CD4-positive, alpha-beta T cell (primary cell): ENCODE measurements at regions of chr19 and their contacts with region 1.

Region 1: GRCh38 chr19:36665832-36666231 is 805 bp downstream of the ZNF461 start:
- DNase-seq: no peak
- ATAC-seq: no peak
- H3K4me3 ChIP-seq: peak overlapping the region; percentile 97
- H3K4me3 Mint-ChIP-seq: peak overlapping the region; percentile 98
- H3K27ac ChIP-seq: no peak overlapping the region
- H3K27ac Mint-ChIP-seq: peak overlapping the region; percentile 92
- H3K4me1 ChIP-seq: peaks cover 24% of the 10 kb centered on the region
- H3K4me1 Mint-ChIP-seq: peaks cover 45% of the 10 kb centered on the region
- H3K27me3 ChIP-seq: no peaks in the 10 kb centered on the region
- H3K27me3 Mint-ChIP-seq: no peaks in the 10 kb centered on the region
- CTCF ChIP-seq: no peak

Region 2: DNA sequence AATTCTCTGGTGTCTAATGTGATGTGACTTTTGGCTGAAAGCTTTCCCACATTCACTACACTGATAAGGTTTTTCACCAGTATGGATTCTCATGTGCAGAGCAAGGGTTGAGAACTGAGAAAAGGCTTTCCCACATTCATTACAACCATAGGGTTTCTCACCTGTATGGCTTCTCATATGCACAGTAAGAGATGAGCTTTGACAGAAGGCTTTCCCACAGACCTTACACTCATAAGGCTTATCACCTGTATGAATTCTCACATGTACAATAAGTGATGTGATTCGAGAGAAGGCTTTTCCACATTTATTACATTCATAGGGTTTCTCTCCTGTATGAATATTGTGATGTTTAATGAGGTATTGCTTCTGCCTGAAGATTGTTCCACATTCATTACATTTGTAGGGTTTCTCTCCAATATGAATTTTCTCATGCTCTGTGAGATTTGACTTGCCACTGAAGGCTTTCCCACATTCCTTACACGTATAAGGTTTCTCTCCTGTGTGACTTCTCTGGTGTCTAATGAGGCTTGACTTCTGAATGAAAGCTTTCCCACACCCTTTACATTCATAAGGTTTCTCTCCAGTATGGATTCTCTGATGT is 151.7 kb before region 1 on chr19:
- CTCF ChIA-PET with region 1: no interaction called
- POLR2A ChIA-PET with region 1: no interaction called
- intact Hi-C with region 1: no loop called
- DNase-seq: no peak
- ATAC-seq: no peak
- H3K4me3 ChIP-seq: no peak overlapping the region
- H3K4me3 Mint-ChIP-seq: no peak overlapping the region
- H3K27ac ChIP-seq: no peak overlapping the region
- H3K27ac Mint-ChIP-seq: no peak overlapping the region
- H3K4me1 ChIP-seq: no peaks in the 10 kb centered on the region
- H3K4me1 Mint-ChIP-seq: no peaks in the 10 kb centered on the region
- H3K27me3 ChIP-seq: no peaks in the 10 kb centered on the region
- H3K27me3 Mint-ChIP-seq: no peaks in the 10 kb centered on the region
- CTCF ChIP-seq: no peak

Region 3: DNA sequence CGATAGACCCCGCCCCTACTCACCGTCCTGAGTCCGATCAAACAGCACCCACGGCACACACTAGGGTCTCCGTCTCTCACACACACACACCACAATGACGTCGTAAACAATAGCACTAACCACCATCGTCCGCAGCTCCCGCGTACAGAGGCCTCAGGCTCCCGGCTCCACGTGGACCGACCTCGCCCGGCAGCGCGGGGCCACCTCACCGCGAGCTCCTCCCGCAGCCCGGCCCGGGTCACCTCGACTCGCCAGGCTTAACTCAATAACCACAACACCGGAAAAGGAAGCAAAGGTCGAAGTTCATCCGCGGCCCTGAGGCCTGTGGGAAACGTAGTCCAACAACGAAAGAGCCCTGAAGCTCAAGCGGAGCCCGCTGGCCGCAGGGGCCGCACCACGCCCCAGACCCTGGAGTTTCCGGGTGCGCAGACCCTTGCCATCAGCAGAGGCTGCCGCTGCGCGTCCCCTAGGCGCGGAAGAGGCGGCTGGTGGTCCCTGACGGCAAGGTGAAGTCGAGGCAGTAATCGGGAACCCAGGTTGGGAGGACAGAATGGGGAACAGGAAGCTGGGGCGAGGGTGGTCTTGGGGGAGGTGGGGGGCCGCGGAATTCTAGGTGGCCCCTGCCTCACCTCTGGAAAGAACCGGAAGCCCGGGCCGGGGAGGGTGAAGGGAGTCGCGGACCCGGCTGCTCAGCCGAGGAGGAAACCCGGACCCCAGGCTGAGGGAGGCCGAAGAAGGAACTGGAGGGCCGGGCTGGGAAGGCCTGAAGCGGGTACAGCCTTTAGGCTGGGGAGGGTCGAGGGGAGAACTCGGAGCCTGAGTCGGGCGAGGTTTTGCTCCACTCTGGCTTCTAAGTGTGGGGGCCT is 92.6 kb before region 1 on chr19 and contains the start of gene ZNF529:
- CTCF ChIA-PET with region 1: interaction called, 4 read pairs
- POLR2A ChIA-PET with region 1: interaction called, 5 read pairs
- intact Hi-C with region 1: loop called in 1 of 2 experiments (anchors 5 kb)
- DNase-seq: peak; percentile 69 to 94 (median 78)
- ATAC-seq: peak; percentile 92
- H3K4me3 ChIP-seq: peak within 1 kb of the TSS; percentile 88
- H3K4me3 Mint-ChIP-seq: peak within 1 kb of the TSS; percentile 94
- H3K27ac ChIP-seq: peak within 1 kb of the TSS; percentile 89 to 97
- H3K27ac Mint-ChIP-seq: peak within 1 kb of the TSS; percentile 93
- H3K4me1 ChIP-seq: peaks cover 25% of the 10 kb centered on the region
- H3K4me1 Mint-ChIP-seq: peaks cover 39% of the 10 kb centered on the region
- H3K27me3 ChIP-seq: no peaks in the 10 kb centered on the region
- H3K27me3 Mint-ChIP-seq: no peaks in the 10 kb centered on the region
- CTCF ChIP-seq: no peak
- total RNA-seq, gene ZNF529: 39.6 to 42.7 TPM

Region 4: DNA sequence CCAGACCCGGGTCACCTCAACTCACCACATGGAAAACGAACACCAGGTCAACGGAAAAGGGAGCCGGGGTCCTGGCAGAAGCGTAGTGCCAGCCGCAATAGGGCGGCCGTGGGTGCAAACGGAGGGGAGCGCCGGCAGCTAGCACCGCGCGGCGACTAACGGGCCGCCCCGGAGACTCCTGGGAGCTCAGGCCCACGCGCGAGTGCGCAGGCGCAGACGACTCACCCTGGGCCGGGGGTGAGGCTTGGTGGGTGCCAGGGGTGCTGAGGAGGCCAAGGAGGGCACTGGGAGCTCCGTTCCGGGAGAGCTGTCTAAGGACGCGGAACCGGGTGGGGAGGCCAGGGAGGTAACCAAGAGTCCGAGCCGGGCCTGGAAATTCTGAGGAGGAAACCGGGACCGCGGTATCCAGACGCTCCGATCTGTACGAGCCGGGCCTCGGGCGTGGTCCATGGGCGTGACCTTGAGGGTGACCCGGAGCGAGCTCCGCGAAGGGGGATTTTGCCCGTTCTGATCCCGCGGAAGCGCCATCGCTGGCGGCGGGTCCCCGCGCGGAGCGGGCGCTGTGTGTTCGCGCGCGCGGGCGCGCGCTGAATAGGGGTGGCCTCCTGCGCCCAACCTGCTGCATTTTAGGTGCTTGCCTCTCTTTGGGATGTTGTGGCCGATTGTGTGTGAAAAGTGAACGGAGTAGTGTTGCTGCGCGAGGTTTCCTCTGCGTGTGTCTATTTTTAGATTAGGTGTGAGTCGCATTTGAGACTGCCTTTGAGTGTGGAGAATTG is 60.5 kb before region 1 on chr19 and contains the start of gene ZNF382:
- CTCF ChIA-PET with region 1: no interaction called
- POLR2A ChIA-PET with region 1: interaction called, 17 read pairs
- intact Hi-C with region 1: loop called in 1 of 2 experiments (anchors 2 kb)
- DNase-seq: peak; percentile 74 to 92 (median 85)
- ATAC-seq: peak; percentile 75
- H3K4me3 ChIP-seq: peak within 1 kb of the TSS; percentile 87
- H3K4me3 Mint-ChIP-seq: peak within 1 kb of the TSS; percentile 85
- H3K27ac ChIP-seq: peak within 1 kb of the TSS; percentile 92 to 95
- H3K27ac Mint-ChIP-seq: peak within 1 kb of the TSS; percentile 83
- H3K4me1 ChIP-seq: peaks cover 10% of the 10 kb centered on the region
- H3K4me1 Mint-ChIP-seq: peaks cover 28% of the 10 kb centered on the region
- H3K27me3 ChIP-seq: no peaks in the 10 kb centered on the region
- H3K27me3 Mint-ChIP-seq: no peaks in the 10 kb centered on the region
- CTCF ChIP-seq: no peak
- total RNA-seq, gene ZNF382: 4.2 to 4.4 TPM

Region 5: DNA sequence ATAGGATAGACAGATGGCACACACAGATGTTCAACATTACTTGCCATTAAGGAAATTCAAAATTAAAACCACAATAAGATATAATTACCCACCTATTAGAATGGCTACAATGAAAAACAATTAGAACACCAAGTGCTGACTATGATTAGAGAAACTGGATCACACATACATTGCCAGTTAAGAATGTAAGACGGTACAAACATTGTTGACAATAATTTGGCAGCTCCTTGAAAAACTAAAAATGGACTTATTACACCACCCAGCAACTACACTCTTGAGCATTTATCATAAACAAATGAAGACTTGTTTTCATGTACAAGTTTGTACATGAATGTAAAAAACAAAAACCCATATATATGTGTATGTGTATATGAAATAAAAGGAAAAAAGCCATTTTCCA is 12.9 kb before region 1 on chr19:
- CTCF ChIA-PET with region 1: no interaction called
- POLR2A ChIA-PET with region 1: no interaction called
- intact Hi-C with region 1: no loop called
- DNase-seq: no peak
- ATAC-seq: no peak
- H3K4me3 ChIP-seq: no peak overlapping the region
- H3K4me3 Mint-ChIP-seq: no peak overlapping the region
- H3K27ac ChIP-seq: no peak overlapping the region
- H3K27ac Mint-ChIP-seq: no peak overlapping the region
- H3K4me1 ChIP-seq: no peaks in the 10 kb centered on the region
- H3K4me1 Mint-ChIP-seq: no peaks in the 10 kb centered on the region
- H3K27me3 ChIP-seq: no peaks in the 10 kb centered on the region
- H3K27me3 Mint-ChIP-seq: no peaks in the 10 kb centered on the region
- CTCF ChIP-seq: no peak

Region 6: GRCh38 chr19:36915992-36916830 is 250.4 kb after region 1 on chr19 and contains the starts of genes ZNF568 and ZNF829:
- CTCF ChIA-PET with region 1: no interaction called
- POLR2A ChIA-PET with region 1: no interaction called
- intact Hi-C with region 1: loop called in 1 of 2 experiments (anchors 5 kb)
- DNase-seq: peak; percentile 83 to 97 (median 90)
- ATAC-seq: peak; percentile 97
- H3K4me3 ChIP-seq: peak within 1 kb of the TSS; percentile 92
- H3K4me3 Mint-ChIP-seq: peak within 1 kb of the TSS; percentile 90
- H3K27ac ChIP-seq: peak within 1 kb of the TSS; percentile 89 to 97
- H3K27ac Mint-ChIP-seq: peak within 1 kb of the TSS; percentile 88
- H3K4me1 ChIP-seq: peaks cover 19% of the 10 kb centered on the region
- H3K4me1 Mint-ChIP-seq: peaks cover 44% of the 10 kb centered on the region
- H3K27me3 ChIP-seq: no peaks in the 10 kb centered on the region
- H3K27me3 Mint-ChIP-seq: no peaks in the 10 kb centered on the region
- CTCF ChIP-seq: peak; percentile 74
- total RNA-seq, gene ZNF568: 3.0 to 4.2 TPM
- total RNA-seq, gene ZNF829: 3.8 to 4.4 TPM